ENCODE measurements at regions of chr2 and their contacts with region 1.

Region 1: DNA sequence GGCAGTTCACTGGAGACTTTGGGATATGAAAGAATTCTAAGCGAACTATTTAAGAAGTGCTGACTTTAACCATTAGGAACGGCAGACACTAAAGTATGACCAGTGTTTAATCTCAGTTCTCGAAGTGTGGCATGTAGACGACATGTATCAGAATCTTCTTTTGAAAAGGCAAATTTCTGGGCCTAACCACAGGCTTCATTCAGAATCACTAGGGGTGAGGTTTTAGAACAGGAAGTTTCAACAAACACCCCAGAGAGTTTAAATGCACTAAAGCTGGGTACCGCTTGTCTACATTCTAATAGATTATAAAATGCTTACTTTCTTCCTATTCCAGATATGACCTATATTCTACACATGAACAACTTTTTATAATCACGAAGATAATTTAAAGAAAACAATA is 180.3 kb downstream of the ANKRD44 start:
- DNase-seq: no peak
- H3K4me3 Mint-ChIP-seq: no peak overlapping the region
- H3K27ac Mint-ChIP-seq: peak overlapping the region; percentile 14
- H3K4me1 Mint-ChIP-seq: peaks cover 79% of the 10 kb centered on the region
- H3K27me3 Mint-ChIP-seq: no peaks in the 10 kb centered on the region

Region 2: DNA sequence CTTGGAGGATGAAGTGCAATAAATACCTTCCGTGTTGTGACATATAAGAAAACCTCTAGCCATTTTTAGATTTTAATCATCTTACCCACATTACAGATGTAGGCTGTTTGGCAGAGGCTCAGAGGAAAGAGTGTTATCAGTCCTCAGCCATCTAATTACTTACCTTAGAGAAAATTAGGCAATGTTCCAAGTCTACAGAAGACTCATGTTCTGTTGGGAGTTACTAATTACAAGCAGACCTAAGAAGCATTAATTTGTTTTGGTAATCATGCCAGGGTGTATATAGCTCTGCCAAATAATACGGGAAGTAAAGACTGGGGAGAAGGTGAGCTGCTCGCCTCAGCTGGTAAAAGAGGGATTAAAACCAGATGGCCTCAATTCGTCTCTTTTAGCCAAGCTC is 78.0 kb before region 1 on chr2:
- CTCF ChIA-PET with region 1: no interaction called
- POLR2A ChIA-PET with region 1: no interaction called
- intact Hi-C with region 1: no loop called
- DNase-seq: no peak
- H3K4me3 Mint-ChIP-seq: no peak overlapping the region
- H3K27ac Mint-ChIP-seq: peak overlapping the region; percentile 54
- H3K4me1 Mint-ChIP-seq: peaks cover 30% of the 10 kb centered on the region
- H3K27me3 Mint-ChIP-seq: no peaks in the 10 kb centered on the region

Region 3: DNA sequence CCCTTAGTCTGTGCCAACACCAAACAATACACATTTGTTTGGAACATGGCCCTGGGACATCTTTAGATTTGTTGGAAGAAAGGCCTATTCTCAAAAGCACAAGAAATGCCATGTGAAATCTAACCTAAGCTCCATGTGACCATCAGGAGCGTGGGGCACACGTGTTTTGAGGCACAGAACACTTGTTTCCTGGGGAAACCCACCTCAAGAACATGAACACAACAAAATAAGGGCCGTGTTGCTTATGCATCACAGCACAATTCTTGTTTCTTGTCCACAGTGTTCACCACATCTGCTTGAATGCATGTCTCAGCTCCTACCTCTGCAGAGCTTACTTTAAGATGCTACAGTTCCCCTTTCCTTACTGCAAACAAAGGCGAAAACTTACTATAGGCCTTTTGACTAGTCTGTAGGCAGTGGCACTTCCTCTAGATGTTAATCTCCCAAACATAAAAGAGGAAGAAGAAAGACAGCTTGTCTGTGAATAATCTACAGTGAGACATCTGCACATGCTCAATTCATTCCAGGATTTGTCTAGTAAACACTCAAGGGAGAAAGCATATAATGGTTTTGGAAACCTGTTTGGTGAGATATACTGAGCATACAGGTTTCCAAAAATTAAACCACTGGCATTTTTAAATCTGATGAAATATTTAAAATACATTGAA is 15.3 kb after region 1 on chr2:
- CTCF ChIA-PET with region 1: interaction called, 4 read pairs
- POLR2A ChIA-PET with region 1: no interaction called
- intact Hi-C with region 1: loop called (anchors 2 kb)
- DNase-seq: no peak
- H3K4me3 Mint-ChIP-seq: no peak overlapping the region
- H3K27ac Mint-ChIP-seq: peak overlapping the region; percentile 87
- H3K4me1 Mint-ChIP-seq: peaks cover 64% of the 10 kb centered on the region
- H3K27me3 Mint-ChIP-seq: no peaks in the 10 kb centered on the region